OCI-LY7 (cell line): ENCODE measurements at regions of chr6 and their contacts with region 1.

Region 1: DNA sequence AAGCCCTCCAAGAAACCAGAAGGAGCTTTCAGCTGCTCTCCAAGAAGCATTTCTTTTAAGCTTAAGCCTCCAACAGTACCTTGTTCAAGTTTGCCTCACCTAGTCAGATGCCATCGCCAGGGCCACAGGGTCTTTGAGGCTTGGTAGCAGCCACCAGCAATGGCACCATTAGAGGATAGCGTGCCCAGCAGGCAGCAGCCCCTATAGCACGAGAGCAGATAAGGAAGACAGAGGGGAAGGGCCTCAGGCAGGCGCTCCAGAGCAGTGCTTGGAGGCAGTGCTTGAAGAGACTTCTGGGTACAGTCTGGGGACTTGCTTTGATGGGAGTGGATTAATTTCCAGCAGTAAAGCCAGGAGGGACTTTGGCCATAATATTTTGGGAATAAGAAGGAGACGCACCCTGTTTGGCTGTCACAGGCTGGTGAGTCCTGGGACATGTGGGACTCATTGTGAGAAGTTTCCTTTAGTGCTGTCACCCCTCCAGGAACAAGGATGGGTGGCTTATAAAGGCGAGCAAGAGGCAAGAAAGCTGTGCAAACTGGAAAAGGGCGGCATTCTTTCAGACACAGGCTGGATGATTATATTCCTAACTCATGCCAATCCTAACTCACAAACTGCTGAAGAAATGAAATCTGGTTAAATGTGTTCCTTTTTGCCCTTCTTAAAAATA is 77.4 kb upstream of the KCNK16 start:
- DNase-seq: no peak
- H3K4me3 ChIP-seq: no peak overlapping the region
- H3K27ac ChIP-seq: no peak overlapping the region
- H3K4me1 ChIP-seq: no peaks in the 10 kb centered on the region
- CTCF ChIP-seq: no peak

Region 2: DNA sequence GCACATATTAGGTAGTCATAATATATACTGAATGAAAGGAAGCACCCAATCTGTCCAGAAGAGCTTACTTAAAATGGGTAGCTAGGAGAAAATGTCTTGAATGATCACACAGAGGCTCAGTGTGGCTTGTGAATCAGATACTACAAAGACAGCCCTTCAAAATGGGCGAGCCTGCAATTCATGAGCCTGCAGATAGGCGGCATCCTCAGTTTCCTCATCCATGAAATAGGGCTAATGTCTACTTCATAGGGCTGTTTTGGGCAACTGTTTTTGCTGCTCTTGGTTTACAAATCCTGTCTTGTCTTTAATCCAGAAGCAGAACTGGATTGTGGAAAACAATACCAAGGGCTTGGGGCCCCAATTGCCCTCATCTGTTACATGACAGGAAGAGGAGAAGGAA is 51.9 kb after region 1 on chr6:
- CTCF ChIA-PET with region 1: no interaction called
- POLR2A ChIA-PET with region 1: no interaction called
- intact Hi-C with region 1: no loop called
- DNase-seq: peak; percentile 5
- H3K4me3 ChIP-seq: no peak overlapping the region
- H3K27ac ChIP-seq: no peak overlapping the region
- H3K4me1 ChIP-seq: no peaks in the 10 kb centered on the region
- CTCF ChIP-seq: peak; percentile 76

Region 3: DNA sequence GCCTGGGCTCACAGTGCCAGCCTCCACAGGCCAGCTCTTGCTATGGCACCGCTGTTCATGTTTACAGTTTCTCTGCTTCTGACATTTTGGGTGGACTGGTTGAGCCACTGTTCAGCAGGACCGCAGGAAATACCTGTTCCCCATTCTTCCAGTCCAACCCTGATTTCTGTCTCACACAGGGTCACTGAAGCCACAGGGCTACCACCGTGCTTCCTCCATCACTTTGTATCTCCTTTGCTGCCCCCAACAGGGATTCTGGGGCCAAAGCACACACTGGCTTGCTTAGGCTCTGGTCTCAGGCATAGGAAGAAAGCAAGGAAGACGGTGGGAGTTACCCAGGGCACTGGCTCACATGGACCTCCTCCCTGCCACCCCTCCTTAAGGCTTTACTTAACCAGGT is 1474.6 kb after region 1 on chr6:
- CTCF ChIA-PET with region 1: interaction called, 10 read pairs
- POLR2A ChIA-PET with region 1: no interaction called
- intact Hi-C with region 1: no loop called
- DNase-seq: peak; percentile 7
- H3K4me3 ChIP-seq: no peak overlapping the region
- H3K27ac ChIP-seq: no peak overlapping the region
- H3K4me1 ChIP-seq: no peaks in the 10 kb centered on the region
- CTCF ChIP-seq: peak; percentile 26; the same call in 1 of the 2 replicates